ENCODE measurements at regions of chr5 and their contacts with region 1.

Region 1: GRCh38 chr5:90866333-90866732 is 307.7 kb downstream of the ADGRV1 start:
- DNase-seq: peak in 1 of 2 donors; percentile 52
- ATAC-seq: peak in 1 of 3 donors; percentile 68
- H3K4me3 ChIP-seq: no peak overlapping the region
- H3K4me3 Mint-ChIP-seq: no peak overlapping the region
- H3K27ac ChIP-seq: no peak overlapping the region
- H3K27ac Mint-ChIP-seq: no peak overlapping the region
- H3K4me1 ChIP-seq: no peaks in the 10 kb centered on the region
- H3K4me1 Mint-ChIP-seq: no peaks in the 10 kb centered on the region
- H3K27me3 ChIP-seq: no peaks in the 10 kb centered on the region
- H3K27me3 Mint-ChIP-seq: peaks cover 9 to 37% of the 10 kb centered on the region in 2 donors
- CTCF ChIP-seq: peak; percentile 60

Region 2: GRCh38 chr5:90916947-90917800 is 50.8 kb after region 1 on chr5:
- intact Hi-C with region 1: no loop called
- DNase-seq: no peak
- ATAC-seq: no peak
- H3K4me3 ChIP-seq: no peak overlapping the region
- H3K4me3 Mint-ChIP-seq: no peak overlapping the region
- H3K27ac ChIP-seq: no peak overlapping the region
- H3K27ac Mint-ChIP-seq: no peak overlapping the region
- H3K4me1 ChIP-seq: no peaks in the 10 kb centered on the region
- H3K4me1 Mint-ChIP-seq: no peaks in the 10 kb centered on the region
- H3K27me3 ChIP-seq: peaks cover 3% of the 10 kb centered on the region
- H3K27me3 Mint-ChIP-seq: peaks cover 5 to 19% of the 10 kb centered on the region in 2 donors
- CTCF ChIP-seq: no peak

Region 3: DNA sequence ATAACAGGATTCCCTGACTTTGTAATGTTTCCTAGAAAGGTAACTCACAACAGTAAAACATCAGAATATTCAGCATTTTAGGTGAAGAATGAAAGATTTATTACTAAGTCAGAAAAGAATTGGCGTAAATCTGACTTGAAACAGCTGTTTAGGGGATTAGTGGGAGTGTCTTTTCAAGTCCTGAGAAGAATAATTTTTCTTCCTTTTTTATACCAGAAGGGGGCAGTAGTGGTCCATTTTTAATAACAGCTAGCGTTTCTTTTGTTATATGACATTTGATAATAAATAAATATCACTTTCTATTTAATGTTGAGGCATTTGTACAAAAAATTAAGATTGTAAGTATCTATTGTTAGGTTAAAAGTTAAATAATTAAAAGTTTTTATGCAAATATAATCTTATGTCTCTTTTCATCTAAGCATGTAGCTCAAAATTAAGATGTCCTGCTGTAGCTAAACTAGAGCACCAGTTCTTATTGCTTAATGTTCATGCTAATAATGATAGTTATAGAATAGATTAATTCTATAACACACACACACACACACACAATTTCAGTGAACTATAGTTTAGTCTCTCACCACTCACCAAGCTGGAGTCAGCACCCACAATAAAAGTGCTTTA is 775.5 kb after region 1 on chr5:
- intact Hi-C with region 1: loop called (anchors 5 kb)
- DNase-seq: peak in 1 of 2 donors; percentile 53
- ATAC-seq: no peak
- H3K4me3 ChIP-seq: no peak overlapping the region
- H3K4me3 Mint-ChIP-seq: no peak overlapping the region
- H3K27ac ChIP-seq: no peak overlapping the region
- H3K27ac Mint-ChIP-seq: no peak overlapping the region
- H3K4me1 ChIP-seq: no peaks in the 10 kb centered on the region
- H3K4me1 Mint-ChIP-seq: no peaks in the 10 kb centered on the region
- H3K27me3 ChIP-seq: no peaks in the 10 kb centered on the region
- H3K27me3 Mint-ChIP-seq: peaks cover 0 to 7% of the 10 kb centered on the region in 2 donors
- CTCF ChIP-seq: peak; percentile 69

Measured in natural killer cell (primary cell).